ENCODE measurements at regions of chr10 and their contacts with region 1.

Region 1: DNA sequence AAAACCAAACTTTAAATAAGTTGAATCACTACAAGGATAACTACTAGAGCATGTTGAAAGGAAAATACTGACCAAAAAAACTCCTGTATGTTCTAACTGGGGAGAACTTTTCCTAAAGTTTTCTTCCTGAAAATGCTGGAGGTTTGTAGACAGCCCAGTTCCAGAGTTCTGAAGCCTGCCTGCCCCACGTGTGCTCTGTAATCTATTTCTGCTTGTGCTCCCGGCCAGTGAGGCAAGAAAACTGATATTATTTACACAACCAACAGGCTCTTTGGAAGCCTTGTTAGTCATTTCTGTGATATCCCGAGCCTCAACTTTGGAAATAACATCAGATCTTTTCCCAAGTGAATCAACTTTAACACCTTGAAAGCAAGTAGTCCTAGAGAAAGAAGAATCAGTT is 46.7 kb downstream of the ZFAND4 start:
- DNase-seq: no peak
- ATAC-seq: no peak
- H3K4me3 ChIP-seq: no peak overlapping the region
- H3K4me3 Mint-ChIP-seq: no peak overlapping the region
- H3K27ac ChIP-seq: no peak overlapping the region
- H3K27ac Mint-ChIP-seq: no peak overlapping the region
- H3K4me1 ChIP-seq: no peaks in the 10 kb centered on the region
- H3K4me1 Mint-ChIP-seq: no peaks in the 10 kb centered on the region
- H3K27me3 ChIP-seq: no peaks in the 10 kb centered on the region
- H3K27me3 Mint-ChIP-seq: no peaks in the 10 kb centered on the region

Region 2: DNA sequence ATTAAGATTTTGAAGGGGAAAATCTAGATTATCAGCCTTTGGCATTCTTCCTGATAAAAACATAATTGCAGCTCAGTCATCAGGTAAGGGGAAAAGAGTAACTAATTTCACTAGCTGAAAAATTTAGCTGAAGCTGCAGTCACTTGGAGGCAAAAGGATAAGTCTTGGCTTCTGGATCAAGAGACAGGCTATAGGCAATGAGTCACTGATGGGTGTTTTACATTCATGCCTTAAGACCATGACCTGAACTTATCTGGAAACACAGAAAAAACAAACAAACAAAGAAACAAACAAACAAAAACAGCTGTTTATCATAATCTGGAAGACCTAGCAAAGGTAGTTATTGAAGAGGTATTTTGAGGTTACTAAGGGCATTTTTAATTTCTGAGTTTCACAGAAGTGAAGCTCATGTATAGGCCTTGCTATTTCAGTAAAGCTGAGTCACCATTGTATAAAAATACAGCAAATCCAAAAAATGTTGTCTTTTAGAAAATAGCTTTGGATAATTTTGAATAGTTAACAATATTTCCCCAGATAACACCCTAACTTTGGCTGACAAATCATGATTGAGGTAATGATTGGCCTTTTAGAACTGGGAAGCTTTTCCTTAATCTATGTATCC is 584.8 kb before region 1 on chr10:
- CTCF ChIA-PET with region 1: no interaction called
- POLR2A ChIA-PET with region 1: no interaction called
- DNase-seq: no peak
- ATAC-seq: no peak
- H3K4me3 ChIP-seq: no peak overlapping the region
- H3K4me3 Mint-ChIP-seq: no peak overlapping the region
- H3K27ac ChIP-seq: no peak overlapping the region
- H3K27ac Mint-ChIP-seq: no peak overlapping the region
- H3K4me1 ChIP-seq: no peaks in the 10 kb centered on the region
- H3K4me1 Mint-ChIP-seq: no peaks in the 10 kb centered on the region
- H3K27me3 ChIP-seq: no peaks in the 10 kb centered on the region
- H3K27me3 Mint-ChIP-seq: peaks cover 16 to 17% of the 10 kb centered on the region in 2 donors

Region 3: GRCh38 chr10:45557275-45557905 is 68.5 kb before region 1 on chr10:
- CTCF ChIA-PET with region 1: interaction called in 1 of 2 experiments, 10 read pairs
- POLR2A ChIA-PET with region 1: no interaction called
- DNase-seq: peak in 11 of 35 experiments; percentile 3 to 45 (median 14)
- ATAC-seq: peak; percentile 34 to 92 (median 68)
- H3K4me3 ChIP-seq: no peak overlapping the region
- H3K4me3 Mint-ChIP-seq: peak overlapping the region; percentile 18 to 71 (median 46)
- H3K27ac ChIP-seq: no peak overlapping the region
- H3K27ac Mint-ChIP-seq: peak overlapping the region; percentile 66 to 71
- H3K4me1 ChIP-seq: peaks cover 11 to 18% of the 10 kb centered on the region in 2 experiments
- H3K4me1 Mint-ChIP-seq: peaks cover 52 to 63% (median 61%) of the 10 kb centered on the region in 3 donors
- H3K27me3 ChIP-seq: no peaks in the 10 kb centered on the region
- H3K27me3 Mint-ChIP-seq: no peaks in the 10 kb centered on the region